ENCODE measurements at regions of chr3 and their contacts with region 1.

Region 1: GRCh38 chr3:84304214-84304613 is 654.6 kb upstream of the CADM2 start:
- DNase-seq: no peak
- ATAC-seq: no peak
- H3K4me3 ChIP-seq: no peak overlapping the region
- H3K27ac ChIP-seq: no peak overlapping the region
- H3K4me1 ChIP-seq: no peaks in the 10 kb centered on the region
- H3K27me3 ChIP-seq: no peaks in the 10 kb centered on the region

Region 2: DNA sequence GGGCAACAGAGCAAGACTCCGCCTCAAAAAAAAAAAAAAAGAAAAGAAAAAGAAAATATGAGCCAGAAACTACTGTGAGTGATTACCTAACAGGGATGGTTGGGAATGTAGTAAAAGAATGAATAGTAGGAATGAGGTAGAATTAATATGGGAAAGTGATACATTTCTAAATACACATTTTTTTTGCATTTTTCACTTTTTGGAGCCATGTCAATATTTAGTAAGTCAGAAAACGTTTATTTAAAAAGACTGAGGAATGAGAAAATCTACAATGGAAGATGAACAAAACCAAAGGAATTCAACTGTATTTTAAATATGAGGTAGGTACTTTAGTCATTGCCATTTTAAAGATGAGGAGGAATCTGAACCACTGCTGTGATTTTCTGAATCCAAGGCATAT is 162.6 kb before region 1 on chr3:
- intact Hi-C with region 1: no loop called
- DNase-seq: no peak
- ATAC-seq: no peak
- H3K4me3 ChIP-seq: no peak overlapping the region
- H3K27ac ChIP-seq: no peak overlapping the region
- H3K4me1 ChIP-seq: no peaks in the 10 kb centered on the region
- H3K27me3 ChIP-seq: no peaks in the 10 kb centered on the region

Region 3: DNA sequence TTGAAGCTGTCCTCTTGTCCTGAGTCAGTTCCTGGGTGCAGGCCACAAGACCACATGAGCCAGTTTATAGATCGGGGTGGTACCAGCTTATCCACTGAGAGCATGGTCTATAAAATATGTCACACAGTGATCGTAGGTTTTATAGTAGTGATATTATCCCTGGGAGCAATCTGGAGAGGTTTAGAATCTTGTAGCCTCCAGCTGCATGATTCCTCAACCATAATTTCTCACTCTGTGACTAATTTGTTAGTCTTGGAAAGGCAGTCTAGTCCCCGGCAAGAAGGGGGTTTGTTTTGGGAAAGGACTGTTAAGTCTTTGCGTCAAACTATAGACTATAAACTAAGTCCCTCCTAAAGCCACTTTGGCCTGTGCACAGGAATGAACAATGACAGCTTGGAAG is 38.4 kb before region 1 on chr3:
- intact Hi-C with region 1: loop called in 1 of 4 experiments (anchors 5 kb)
- DNase-seq: no peak
- ATAC-seq: no peak
- H3K4me3 ChIP-seq: no peak overlapping the region
- H3K27ac ChIP-seq: no peak overlapping the region
- H3K4me1 ChIP-seq: no peaks in the 10 kb centered on the region
- H3K27me3 ChIP-seq: no peaks in the 10 kb centered on the region